Right ventricle myocardium inferior (tissue), 1 donor: ENCODE measurements at regions of chr17 and their contacts with region 1.

Region 1: GRCh38 chr17:81034779-81035388 is at the start of gene BAIAP2:
- DNase-seq: peak; percentile 98
- ATAC-seq: peak; percentile 80
- total RNA-seq, gene BAIAP2: 32.1 TPM

Region 2: DNA sequence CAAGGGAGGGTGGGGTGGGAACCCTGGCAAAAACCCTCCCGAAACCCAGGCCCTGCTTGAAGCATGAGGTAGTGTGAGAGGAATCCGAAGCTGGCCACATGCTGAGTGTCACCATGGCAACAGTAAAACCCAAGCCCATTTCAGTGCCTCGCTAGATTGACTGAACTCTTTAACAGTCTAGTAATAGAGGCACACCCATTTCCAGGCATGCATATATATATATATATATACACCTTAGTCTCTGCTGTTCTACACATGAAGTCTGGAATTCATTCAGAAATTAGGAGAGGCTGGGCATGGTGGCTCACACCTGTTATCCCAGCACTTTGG is 103.0 kb before region 1 on chr17:
- intact Hi-C with region 1: no loop called
- DNase-seq: no peak
- ATAC-seq: no peak

Region 3: DNA sequence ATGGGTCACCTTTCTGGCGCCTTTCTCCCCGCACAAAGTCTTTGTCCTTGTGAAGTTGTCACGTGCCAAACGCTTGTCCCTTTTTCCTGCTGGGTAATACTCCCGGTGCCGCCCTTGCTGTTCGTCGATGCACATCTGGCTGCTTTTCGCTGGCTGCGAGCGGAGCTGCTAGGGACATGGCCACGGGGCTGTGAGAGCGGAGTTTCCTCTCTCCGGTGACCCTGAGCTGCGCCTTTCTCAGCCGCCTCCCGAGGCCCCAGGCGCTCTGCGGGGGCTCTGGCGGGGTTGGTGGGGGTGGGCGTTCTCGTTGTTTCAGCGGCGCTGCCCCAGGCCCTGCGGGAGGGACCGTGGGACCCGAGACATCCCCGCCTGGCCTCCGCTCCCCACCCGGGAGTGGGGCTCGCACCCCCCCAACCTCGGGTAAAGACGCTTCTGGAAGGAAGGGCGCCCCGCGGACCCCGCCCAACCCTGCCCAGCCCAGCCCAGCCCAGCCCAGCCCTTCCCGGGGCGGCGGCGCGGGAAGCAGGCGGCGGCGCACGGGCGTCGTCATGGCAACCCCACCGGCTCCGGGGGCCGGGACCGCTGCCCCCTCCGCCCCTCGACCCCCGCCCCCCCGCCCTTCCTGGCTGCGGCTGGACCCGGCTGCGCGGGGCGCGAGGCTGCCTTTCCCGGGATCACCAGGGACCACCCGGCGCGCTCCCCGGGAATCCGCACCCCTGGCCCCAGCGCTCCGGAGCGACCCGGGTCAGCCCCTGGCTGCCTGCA is 31.0 kb before region 1 on chr17:
- intact Hi-C with region 1: no loop called
- DNase-seq: no peak
- ATAC-seq: no peak

Region 4: DNA sequence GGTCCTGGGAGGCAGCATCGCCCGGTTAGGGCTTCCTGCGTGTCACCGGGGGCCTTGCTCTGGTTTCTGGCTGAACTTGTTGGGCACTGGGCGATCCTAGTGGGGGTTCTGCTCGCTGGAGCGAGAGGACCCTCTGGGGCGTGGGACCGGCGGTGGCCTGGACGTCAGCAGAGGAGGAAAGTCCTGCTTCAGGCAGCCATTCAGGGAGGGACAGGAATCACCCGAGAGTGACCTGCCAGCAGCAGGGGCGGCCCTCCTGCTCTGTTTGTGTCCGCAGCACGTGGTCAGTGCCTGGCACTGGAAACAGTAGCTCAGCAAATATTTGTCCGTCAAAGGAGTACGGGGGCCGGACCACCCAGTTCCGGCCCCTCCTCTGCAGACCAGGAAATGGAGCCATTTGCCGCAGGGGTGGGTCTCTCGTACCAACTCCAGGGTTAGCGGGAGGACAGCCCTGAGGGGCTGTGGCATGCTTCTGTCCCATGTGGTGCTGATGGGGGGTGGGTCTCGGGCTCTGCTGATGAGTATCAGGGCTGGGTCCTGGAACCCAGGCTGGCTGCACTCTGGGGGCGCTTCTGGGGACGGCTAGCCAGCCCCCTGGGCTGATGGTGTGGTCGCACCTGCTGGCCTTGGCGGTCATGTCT is 48.4 kb after region 1 on chr17:
- intact Hi-C with region 1: loop called (anchors 2 kb)
- DNase-seq: no peak
- ATAC-seq: no peak

Region 5: DNA sequence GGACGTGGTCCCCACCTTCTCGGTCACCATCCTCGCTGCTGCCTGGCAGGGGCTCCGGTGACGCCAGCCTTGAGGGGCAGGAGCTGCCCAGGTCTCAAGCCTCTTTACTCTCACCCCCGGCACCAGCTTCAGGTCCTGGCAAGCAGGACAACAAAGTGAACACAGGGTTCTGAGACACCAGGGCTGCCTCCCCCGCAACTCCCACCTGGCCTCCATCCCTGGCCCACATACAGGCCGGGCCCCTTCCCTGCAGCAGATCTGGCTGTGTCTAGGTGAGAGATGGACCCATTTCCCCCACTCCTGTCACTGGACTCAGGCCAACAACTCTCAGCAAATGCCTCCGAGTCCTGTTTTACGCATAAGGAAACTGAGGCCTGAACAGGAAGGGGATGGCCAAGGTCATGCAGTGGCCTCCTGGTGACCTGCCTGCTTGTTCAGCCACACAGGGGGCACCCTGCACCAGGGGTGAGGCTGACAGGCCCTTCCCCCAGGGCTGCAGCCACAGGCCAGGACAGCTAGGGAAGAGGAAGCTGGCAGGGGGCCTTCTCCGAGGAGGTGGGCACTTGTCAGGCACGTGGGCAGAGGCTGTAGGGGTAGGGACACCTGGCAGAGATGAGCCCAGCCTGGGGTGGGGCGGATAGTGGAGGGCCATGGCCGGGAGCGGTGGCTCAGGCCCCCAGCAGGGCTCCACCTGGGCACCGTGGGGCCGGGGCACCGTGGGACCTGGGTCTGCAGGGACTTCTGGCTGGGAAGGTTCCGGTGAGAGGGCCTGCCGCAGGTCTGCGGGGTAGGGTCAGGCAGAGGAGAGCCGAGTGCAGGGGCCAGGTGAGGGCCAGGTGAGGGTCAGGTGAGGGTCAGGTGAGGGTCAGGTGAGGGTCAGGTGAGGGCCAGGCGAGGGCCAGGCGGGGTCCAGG is 83.7 kb after region 1 on chr17:
- intact Hi-C with region 1: no loop called
- DNase-seq: no peak
- ATAC-seq: no peak

Region 6: GRCh38 chr17:81238817-81239600 is 204.1 kb after region 1 on chr17 and contains the starts of genes NDUFAF8 and TEPSIN:
- intact Hi-C with region 1: loop called (anchors 5 kb)
- DNase-seq: peak; percentile 98
- ATAC-seq: peak; percentile 98
- total RNA-seq, gene NDUFAF8: 58.0 TPM
- total RNA-seq, gene TEPSIN: 11.1 TPM

Region 7: GRCh38 chr17:81593105-81593871 is 558.4 kb after region 1 on chr17:
- intact Hi-C with region 1: no loop called
- DNase-seq: no peak
- ATAC-seq: peak; percentile 50